ENCODE measurements at regions of chrX and their contacts with region 1.

Region 1: GRCh38 chrX:118345401-118346257 is at the start of gene WDR44:
- DNase-seq: peak; percentile 95
- ATAC-seq: peak; percentile 93
- H3K4me3 Mint-ChIP-seq: peak within 1 kb of the TSS; percentile 96
- H3K27ac Mint-ChIP-seq: peak within 1 kb of the TSS; percentile 95
- H3K4me1 Mint-ChIP-seq: peaks cover 27% of the 10 kb centered on the region
- H3K27me3 Mint-ChIP-seq: no peaks in the 10 kb centered on the region
- total RNA-seq, gene WDR44: 8.9 to 9.3 TPM

Region 2: DNA sequence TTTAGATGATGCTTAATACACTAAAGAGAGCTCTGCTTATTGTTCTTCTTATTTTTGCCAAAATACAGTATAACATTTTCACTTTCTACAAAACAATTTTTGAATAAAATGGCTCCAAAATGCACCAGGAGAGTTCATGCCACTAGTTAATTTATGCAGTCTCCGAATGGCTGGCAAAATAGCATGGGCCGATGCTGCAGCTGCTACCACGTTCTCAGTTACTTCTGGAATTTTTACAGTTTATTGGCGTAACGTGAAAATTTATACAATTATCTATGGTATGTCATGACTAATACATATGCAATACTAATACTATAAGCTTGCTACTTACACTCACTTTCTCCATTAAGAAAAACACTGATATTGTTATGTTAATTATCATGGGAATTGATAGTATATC is 245.5 kb before region 1 on chrX:
- CTCF ChIA-PET with region 1: no interaction called
- POLR2A ChIA-PET with region 1: no interaction called
- intact Hi-C with region 1: no loop called
- DNase-seq: no peak
- ATAC-seq: no peak
- H3K4me3 Mint-ChIP-seq: no peak overlapping the region
- H3K27ac Mint-ChIP-seq: no peak overlapping the region
- H3K4me1 Mint-ChIP-seq: no peaks in the 10 kb centered on the region
- H3K27me3 Mint-ChIP-seq: no peaks in the 10 kb centered on the region

Region 3: DNA sequence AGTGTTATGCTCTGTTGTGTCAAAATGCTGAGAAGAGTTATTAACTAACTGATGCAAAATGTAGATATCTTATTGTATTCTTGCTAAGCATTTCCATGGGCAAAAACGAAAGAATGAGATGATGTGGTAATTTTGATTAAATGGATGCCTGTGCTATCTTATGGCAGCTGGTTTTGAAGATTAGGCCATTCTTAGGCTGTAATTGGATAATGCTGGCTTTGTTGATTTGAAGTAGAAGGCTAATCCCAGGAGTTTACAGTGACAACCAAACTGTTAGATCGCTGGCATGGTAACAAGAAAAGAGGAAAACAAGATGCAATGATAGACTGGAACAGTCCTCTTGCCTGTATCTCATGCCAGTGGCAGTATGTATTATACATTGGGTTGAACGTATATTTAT is 73.9 kb before region 1 on chrX:
- CTCF ChIA-PET with region 1: no interaction called
- POLR2A ChIA-PET with region 1: no interaction called
- intact Hi-C with region 1: no loop called
- DNase-seq: no peak
- ATAC-seq: no peak
- H3K4me3 Mint-ChIP-seq: no peak overlapping the region
- H3K27ac Mint-ChIP-seq: no peak overlapping the region
- H3K4me1 Mint-ChIP-seq: no peaks in the 10 kb centered on the region
- H3K27me3 Mint-ChIP-seq: no peaks in the 10 kb centered on the region

Region 4: GRCh38 chrX:118370921-118371624 is 25.4 kb after region 1 on chrX:
- CTCF ChIA-PET with region 1: no interaction called
- POLR2A ChIA-PET with region 1: no interaction called
- intact Hi-C with region 1: loop called in 1 of 2 experiments (anchors 2 kb)
- DNase-seq: no peak
- ATAC-seq: no peak
- H3K4me3 Mint-ChIP-seq: no peak overlapping the region
- H3K27ac Mint-ChIP-seq: no peak overlapping the region
- H3K4me1 Mint-ChIP-seq: peaks cover 8% of the 10 kb centered on the region
- H3K27me3 Mint-ChIP-seq: no peaks in the 10 kb centered on the region

Region 5: GRCh38 chrX:118495061-118495921 is 149.7 kb after region 1 on chrX and contains the start of gene DOCK11:
- CTCF ChIA-PET with region 1: no interaction called
- POLR2A ChIA-PET with region 1: no interaction called
- intact Hi-C with region 1: loop called in 1 of 2 experiments (anchors 1 kb)
- DNase-seq: peak; percentile 90
- ATAC-seq: peak; percentile 82
- H3K4me3 Mint-ChIP-seq: peak within 1 kb of the TSS; percentile 99
- H3K27ac Mint-ChIP-seq: peak within 1 kb of the TSS; percentile 98
- H3K4me1 Mint-ChIP-seq: peaks cover 23% of the 10 kb centered on the region
- H3K27me3 Mint-ChIP-seq: no peaks in the 10 kb centered on the region
- total RNA-seq, gene DOCK11: 37.2 to 47.3 TPM

Region 6: DNA sequence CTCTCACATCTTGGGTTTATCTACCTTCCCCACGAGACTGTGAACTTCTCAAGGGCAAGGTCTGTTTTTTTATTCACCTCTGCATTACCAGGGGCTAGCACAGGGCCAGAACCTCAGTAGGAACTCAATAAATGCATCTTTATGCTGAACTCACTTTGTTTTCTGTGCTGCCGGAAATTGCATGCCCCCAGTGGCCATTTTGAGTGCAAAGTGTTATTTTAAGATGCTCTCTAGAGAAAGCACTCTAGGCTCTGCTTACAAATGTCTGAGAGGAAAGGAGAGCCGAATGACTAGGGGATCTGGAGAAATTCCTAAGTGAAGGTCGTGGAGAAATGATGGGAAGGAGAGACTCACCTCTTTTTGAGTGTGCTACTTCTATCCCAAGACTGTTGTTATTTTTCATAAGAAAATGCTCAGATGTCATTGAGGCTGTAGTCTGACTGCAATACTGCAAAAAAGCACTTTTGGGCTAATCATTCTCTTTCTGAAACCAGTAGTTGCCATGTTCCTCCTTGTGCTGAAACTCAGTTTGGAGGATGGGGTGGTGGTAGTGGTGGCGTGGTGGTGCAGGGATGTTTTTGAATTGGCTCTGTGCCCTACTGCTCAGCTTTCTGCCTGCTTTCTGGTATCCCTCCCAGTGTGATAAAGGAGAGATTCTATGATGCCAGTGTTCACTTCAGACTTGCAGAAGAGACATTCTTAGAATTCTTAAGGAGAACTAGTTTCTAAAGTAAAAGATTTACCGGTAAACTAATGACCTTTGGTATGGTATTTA is 191.2 kb after region 1 on chrX:
- CTCF ChIA-PET with region 1: no interaction called
- POLR2A ChIA-PET with region 1: no interaction called
- intact Hi-C with region 1: loop called in 1 of 2 experiments (anchors 2 kb)
- DNase-seq: peak; percentile 64
- ATAC-seq: peak; percentile 50
- H3K4me3 Mint-ChIP-seq: peak overlapping the region; percentile 46
- H3K27ac Mint-ChIP-seq: peak overlapping the region; percentile 96
- H3K4me1 Mint-ChIP-seq: peaks cover 70% of the 10 kb centered on the region
- H3K27me3 Mint-ChIP-seq: no peaks in the 10 kb centered on the region

Measured in activated CD4-positive, alpha-beta T cell treated with anti-CD3 and anti-CD28 coated beads for 36 hours (primary cell).